A673 (cell line): ENCODE measurements at regions of chr19 and their contacts with region 1.

Region 1: GRCh38 chr19:43595999-43596841 is at the starts of genes IRGQ and ZNF576:
- DNase-seq: peak; percentile 99
- H3K4me3 ChIP-seq: peak within 1 kb of the TSS; percentile 78
- H3K27ac ChIP-seq: peak within 1 kb of the TSS; percentile 96
- H3K4me1 ChIP-seq: peaks cover 12% of the 10 kb centered on the region
- H3K27me3 ChIP-seq: no peaks in the 10 kb centered on the region
- CTCF ChIP-seq: no peak; the same call in 1 of the 2 replicates
- total RNA-seq, gene IRGQ: 34.1 and 37.7 TPM in 2 replicates
- total RNA-seq, gene ZNF576: 19.2 and 20.3 TPM in 2 replicates

Region 2: DNA sequence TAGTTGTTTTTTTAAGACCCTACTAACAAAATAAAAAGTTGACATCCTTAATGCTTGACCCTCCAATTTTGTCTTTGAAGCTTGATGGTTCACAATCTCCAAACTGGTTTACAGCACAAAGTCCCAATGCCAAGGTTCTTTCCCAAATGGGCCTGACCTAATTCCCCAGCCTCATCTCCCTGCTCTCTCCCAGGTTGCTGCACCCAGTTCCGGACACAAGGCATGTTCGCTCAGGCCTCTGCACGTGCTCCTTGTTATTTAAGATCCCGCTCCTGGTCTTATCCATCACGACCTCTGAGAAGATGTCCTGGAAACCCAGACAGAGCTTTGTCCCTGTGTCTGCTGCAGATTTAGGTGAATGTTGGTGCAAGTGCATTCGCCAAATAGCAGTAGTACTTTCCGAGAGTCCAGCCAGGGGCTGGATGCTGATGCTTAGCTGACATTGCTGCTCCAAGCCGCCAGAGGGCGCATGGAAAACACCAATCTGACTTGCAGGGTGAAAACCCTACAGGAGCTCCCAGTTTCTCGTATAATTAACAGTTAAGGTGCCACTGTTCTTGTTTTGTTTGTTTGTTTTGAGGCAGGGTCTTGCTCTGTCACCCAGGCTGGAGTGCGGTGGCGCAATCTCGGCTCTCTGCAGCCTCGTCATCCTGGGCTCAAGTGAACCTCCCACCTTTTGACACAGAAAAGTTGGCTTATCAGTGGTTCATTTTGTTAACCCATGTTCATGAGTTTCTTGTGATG is 149.3 kb before region 1 on chr19:
- CTCF ChIA-PET with region 1: interaction called, 10 read pairs
- POLR2A ChIA-PET with region 1: no interaction called
- intact Hi-C with region 1: loop called (anchors 5 kb)
- DNase-seq: peak; percentile 78
- H3K4me3 ChIP-seq: no peak overlapping the region
- H3K27ac ChIP-seq: no peak overlapping the region
- H3K4me1 ChIP-seq: no peaks in the 10 kb centered on the region
- H3K27me3 ChIP-seq: no peaks in the 10 kb centered on the region
- CTCF ChIP-seq: peak; percentile 94

Region 3: DNA sequence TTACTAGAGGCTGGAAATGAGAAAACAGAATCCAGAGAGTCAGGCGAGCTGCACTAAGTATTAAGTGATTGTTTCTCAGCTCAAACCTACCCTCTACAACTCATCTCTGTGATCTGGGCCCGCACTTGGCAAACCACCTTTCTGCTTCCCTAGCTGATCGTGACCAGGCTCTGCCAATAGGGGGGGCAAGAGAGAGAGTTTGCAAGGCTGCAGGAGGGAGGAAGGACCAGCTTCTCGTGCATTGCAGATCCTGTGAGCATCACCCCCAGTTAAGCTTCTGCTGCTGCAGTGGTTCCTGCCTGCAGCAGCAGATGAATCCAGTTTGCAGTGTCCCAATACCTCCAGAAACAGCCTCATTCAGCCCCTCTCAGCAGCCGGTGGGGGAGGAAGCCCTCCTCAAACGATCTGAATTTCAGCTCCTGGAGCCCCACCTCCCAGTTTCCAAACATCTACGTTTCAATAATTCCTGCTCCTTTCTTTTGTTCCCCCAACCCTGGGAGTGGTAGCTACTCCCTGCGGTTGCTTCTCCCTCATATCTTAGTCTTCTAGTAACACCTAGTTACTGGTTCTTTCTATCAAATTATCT is 40.9 kb before region 1 on chr19:
- CTCF ChIA-PET with region 1: interaction called, 25 read pairs
- POLR2A ChIA-PET with region 1: interaction called, 5 read pairs
- intact Hi-C with region 1: no loop called
- DNase-seq: peak; percentile 88
- H3K4me3 ChIP-seq: no peak overlapping the region
- H3K27ac ChIP-seq: peak overlapping the region; percentile 70
- H3K4me1 ChIP-seq: peaks cover 26% of the 10 kb centered on the region
- H3K27me3 ChIP-seq: no peaks in the 10 kb centered on the region
- CTCF ChIP-seq: peak; percentile 86

Region 4: DNA sequence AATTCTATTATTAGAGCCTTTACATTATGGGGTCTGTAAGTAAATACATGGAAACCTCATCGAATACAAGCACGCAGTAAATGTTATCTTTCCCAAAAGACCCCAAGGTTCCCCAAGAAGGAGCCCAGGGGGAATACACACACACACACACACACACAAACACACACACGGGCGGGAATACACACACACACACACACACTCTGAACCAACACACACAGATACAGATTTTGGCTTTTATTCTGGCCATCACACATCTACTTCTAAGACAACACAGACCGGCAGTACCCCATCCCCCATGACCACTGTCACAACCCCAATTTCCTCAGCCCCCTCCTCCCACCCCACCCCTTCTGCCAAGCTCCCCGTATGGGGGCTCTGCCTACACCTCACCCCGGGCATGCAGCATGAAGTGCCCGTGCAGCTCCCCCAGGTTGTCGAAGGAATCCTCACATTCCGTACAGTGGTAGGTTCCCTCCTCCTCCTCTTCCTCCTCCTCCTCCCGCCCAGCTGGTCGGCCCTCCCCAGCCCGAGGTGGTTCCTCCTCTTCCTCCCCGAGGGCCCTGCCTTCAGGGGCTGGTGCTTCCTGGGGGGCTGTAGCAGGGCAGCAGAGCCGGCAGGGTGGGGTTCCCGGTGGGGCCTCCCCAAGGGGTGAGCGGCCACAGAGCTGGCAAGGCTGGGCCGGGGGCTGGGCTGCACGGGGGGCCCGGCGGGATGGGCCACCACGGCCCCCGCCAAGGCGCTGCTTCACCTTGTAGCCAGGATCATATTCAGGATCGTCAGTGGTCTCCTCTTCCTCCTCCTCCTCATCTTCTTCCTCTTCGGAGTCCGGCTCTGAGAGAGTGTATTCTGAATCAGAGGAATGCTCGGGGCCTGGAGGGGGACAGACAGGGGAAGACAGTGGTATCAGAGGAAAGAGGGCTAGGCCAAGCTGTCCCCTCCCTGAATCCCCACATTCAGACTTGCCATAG is 11.3 kb after region 1 on chr19:
- CTCF ChIA-PET with region 1: no interaction called
- POLR2A ChIA-PET with region 1: interaction called, 14 read pairs
- intact Hi-C with region 1: no loop called
- DNase-seq: no peak
- H3K4me3 ChIP-seq: no peak overlapping the region
- H3K27ac ChIP-seq: peak overlapping the region; percentile 76
- H3K4me1 ChIP-seq: peaks cover 41% of the 10 kb centered on the region
- H3K27me3 ChIP-seq: no peaks in the 10 kb centered on the region
- CTCF ChIP-seq: no peak

Region 5: DNA sequence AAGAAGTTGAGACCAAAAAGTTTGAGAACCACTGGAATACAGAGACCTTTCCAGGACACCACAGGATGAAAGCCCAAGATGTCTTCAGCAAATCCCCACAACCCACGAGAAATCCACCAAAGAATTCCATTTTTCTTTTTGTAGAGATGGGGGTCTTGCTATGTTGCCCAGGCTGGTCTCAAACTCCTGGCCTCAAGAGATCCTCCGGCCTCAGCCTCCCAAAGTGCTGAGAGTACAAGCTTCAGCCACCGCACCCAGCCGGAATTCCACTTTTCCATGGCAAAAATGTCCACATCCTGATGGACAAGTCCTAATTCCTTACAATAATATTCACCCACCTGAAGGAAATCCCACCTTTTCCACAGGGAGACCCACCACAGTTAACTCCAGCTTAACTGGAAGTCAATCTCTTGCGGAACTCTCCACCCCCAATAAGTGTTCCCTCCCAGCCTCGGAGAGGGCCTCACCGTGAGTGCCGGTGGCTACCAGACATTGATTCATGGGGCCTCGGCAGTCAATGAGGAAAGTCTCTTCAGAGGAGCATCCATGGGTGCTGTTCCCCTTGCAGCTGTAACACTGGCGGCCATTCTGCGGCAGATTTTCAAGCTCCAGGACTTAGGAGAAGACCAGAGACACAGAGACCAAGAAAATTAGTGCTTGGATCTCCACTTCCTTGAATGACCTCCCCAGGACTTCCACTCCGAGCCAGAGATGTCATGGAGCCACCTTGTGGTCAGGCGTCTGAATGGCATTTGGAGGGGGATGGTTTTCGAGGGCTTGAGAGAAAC is 55.7 kb after region 1 on chr19:
- CTCF ChIA-PET with region 1: no interaction called
- POLR2A ChIA-PET with region 1: no interaction called
- intact Hi-C with region 1: loop called (anchors 1 kb)
- DNase-seq: peak; percentile 76
- H3K4me3 ChIP-seq: no peak overlapping the region
- H3K27ac ChIP-seq: no peak overlapping the region
- H3K4me1 ChIP-seq: no peaks in the 10 kb centered on the region
- H3K27me3 ChIP-seq: no peaks in the 10 kb centered on the region
- CTCF ChIP-seq: peak; percentile 77

Region 6: GRCh38 chr19:43826787-43827754 is 230.9 kb after region 1 on chr19 and contains the start of gene ZNF283:
- CTCF ChIA-PET with region 1: no interaction called
- POLR2A ChIA-PET with region 1: no interaction called
- intact Hi-C with region 1: no loop called
- DNase-seq: peak; percentile 89
- H3K4me3 ChIP-seq: peak within 1 kb of the TSS; percentile 64
- H3K27ac ChIP-seq: peak within 1 kb of the TSS; percentile 60
- H3K4me1 ChIP-seq: peaks cover 5% of the 10 kb centered on the region
- H3K27me3 ChIP-seq: peaks cover 1% of the 10 kb centered on the region
- CTCF ChIP-seq: no peak
- total RNA-seq, gene ZNF283: 9.4 and 9.7 TPM in 2 replicates